HCT116 (cell line): ENCODE measurements at regions of chr17 and their contacts with region 1.

Region 1: GRCh38 chr17:36629252-36629847 is 28.0 kb downstream of the MRM1 start:
- DNase-seq: peak; percentile 54
- ATAC-seq: peak; percentile 95
- H3K4me3 ChIP-seq: no peak overlapping the region
- H3K27ac ChIP-seq: no peak overlapping the region
- H3K4me1 ChIP-seq: peaks cover 0 to 4% of the 10 kb centered on the region in 2 experiments; a peak in 2 of 4 replicates
- H3K27me3 ChIP-seq: 0 out of 2 replicates have a peak, but pooled peaks cover 4% of the 10 kb centered on the region
- CTCF ChIP-seq: peak; percentile 92 to 98 (median 98)
- POLR2A ChIP-seq: no peak
- RAD21 ChIP-seq: peak; percentile 98

Region 2: DNA sequence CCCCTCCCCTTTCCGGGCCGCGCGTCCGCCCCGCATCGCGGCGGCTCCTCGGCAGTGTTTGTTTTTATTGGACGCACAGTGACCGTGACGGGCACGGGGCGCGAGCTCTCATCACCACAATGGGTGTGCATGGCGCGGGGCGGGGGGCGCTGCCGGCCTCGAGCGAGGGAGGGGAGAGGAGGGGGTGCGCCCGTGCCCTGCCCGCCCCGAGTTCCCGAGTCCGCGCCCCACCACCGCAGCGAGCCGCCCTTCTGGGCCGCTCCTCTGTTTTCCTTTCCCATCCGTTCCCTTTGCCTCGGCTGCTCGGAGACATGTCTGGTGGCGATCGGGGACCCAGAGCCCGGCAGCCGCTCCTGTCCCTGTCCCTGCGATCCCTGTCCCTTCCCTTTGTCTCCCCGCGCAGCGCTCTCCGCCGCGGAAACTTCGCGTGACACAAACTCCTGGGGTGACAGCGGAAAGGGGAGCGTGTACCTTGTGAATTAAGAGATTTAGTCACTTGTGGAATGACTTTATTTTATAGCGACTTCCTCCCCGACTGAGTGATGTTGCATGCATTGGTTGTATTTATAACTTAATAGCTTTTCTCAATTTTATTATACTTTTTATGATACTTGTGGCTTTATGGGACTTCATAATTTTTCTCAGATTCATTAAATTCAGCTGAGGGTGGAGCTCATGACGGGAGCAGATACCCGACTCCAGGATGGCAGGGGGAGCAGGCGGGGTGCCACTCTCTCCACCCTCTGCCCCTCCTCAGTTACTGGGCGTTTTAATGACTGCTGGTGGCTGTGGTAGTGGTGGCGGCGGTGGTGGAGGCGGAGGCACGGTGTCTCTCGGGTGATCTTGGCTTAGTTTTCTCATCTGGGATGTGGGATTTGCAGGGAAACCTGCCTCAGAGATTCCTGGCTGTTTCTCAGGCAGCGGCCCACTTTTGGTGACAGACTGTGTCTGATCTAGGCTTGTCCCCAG is 12.8 kb after region 1 on chr17:
- CTCF ChIA-PET with region 1: no interaction called
- POLR2A ChIA-PET with region 1: no interaction called
- RAD21 ChIA-PET with region 1: no interaction called
- intact Hi-C with region 1: no loop called
- DNase-seq: no peak
- ATAC-seq: no peak
- H3K4me3 ChIP-seq: no peak overlapping the region
- H3K27ac ChIP-seq: no peak overlapping the region
- H3K4me1 ChIP-seq: no peaks in the 10 kb centered on the region
- H3K27me3 ChIP-seq: no peaks in the 10 kb centered on the region
- CTCF ChIP-seq: no peak
- POLR2A ChIP-seq: no peak
- RAD21 ChIP-seq: no peak

Region 3: GRCh38 chr17:36755586-36755985 is 126.2 kb after region 1 on chr17:
- CTCF ChIA-PET with region 1: interaction called, 3 read pairs
- POLR2A ChIA-PET with region 1: no interaction called
- RAD21 ChIA-PET with region 1: interaction called in 1 of 2 experiments, 3 read pairs
- intact Hi-C with region 1: loop called (anchors 1 kb)
- DNase-seq: peak; percentile 57
- ATAC-seq: peak; percentile 99
- H3K4me3 ChIP-seq: no peak overlapping the region
- H3K27ac ChIP-seq: no peak overlapping the region
- H3K4me1 ChIP-seq: peaks cover 0 to 6% of the 10 kb centered on the region in 2 experiments; a peak in 1 of 4 replicates
- H3K27me3 ChIP-seq: peaks cover 8% of the 10 kb centered on the region; the same call in 1 of the 2 replicates
- CTCF ChIP-seq: peak; percentile 42 to 87 (median 70); a peak in 5 of 6 replicates
- POLR2A ChIP-seq: no peak
- RAD21 ChIP-seq: peak; percentile 63

Region 4: GRCh38 chr17:37220607-37220953 is 591.2 kb after region 1 on chr17:
- CTCF ChIA-PET with region 1: interaction called, 3 read pairs
- POLR2A ChIA-PET with region 1: interaction called, 3 read pairs
- RAD21 ChIA-PET with region 1: no interaction called
- intact Hi-C with region 1: loop called (anchors 5 kb)
- DNase-seq: peak; percentile 2
- ATAC-seq: no peak
- H3K4me3 ChIP-seq: no peak overlapping the region
- H3K27ac ChIP-seq: no peak overlapping the region
- H3K4me1 ChIP-seq: no peaks in the 10 kb centered on the region
- H3K27me3 ChIP-seq: no peaks in the 10 kb centered on the region
- CTCF ChIP-seq: peak; percentile 24 to 45 (median 26); a peak in 4 of 6 replicates
- POLR2A ChIP-seq: no peak
- RAD21 ChIP-seq: peak; percentile 56

Region 5: DNA sequence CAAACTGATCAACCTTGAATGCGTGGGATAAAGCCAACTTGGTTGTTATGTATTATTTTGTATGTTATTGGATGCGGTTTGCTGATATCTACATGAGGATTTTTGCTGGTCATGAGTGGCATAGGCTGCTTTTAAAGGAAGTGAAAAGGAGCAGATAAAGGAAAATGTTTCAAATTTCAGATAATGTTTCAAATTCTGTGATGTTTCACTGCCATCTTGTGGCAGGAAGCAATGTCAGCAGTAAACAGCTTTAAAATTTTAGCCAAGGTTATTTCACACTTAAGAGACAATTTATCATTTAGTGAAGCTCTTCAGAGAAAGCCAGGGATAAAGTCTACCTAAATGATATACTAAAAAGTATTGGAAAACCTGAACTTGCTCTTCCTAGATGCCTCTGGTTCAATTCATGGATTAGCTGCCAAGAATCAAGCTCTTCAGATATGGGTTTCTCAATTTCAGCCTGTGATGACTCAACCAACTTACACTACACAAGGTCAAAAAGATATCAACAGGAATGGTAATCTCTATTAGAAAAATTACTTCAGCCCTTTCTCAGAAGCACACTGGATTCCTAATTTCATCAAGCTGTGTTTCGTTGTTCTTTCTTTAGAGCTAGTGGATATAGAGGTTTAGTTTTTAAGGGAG is 610.5 kb after region 1 on chr17:
- CTCF ChIA-PET with region 1: interaction called, 25 read pairs
- POLR2A ChIA-PET with region 1: no interaction called
- RAD21 ChIA-PET with region 1: no interaction called
- intact Hi-C with region 1: loop called (anchors 1 kb)
- DNase-seq: peak; percentile 3
- ATAC-seq: no peak
- H3K4me3 ChIP-seq: no peak overlapping the region
- H3K27ac ChIP-seq: no peak overlapping the region
- H3K4me1 ChIP-seq: no peaks in the 10 kb centered on the region
- H3K27me3 ChIP-seq: no peaks in the 10 kb centered on the region
- CTCF ChIP-seq: peak; percentile 56 to 71 (median 59); a peak in 5 of 6 replicates
- POLR2A ChIP-seq: no peak
- RAD21 ChIP-seq: peak; percentile 68

Region 6: GRCh38 chr17:37399404-37399803 is 770.1 kb after region 1 on chr17:
- CTCF ChIA-PET with region 1: no interaction called
- POLR2A ChIA-PET with region 1: no interaction called
- RAD21 ChIA-PET with region 1: no interaction called
- intact Hi-C with region 1: loop called (anchors 5 kb)
- DNase-seq: no peak
- ATAC-seq: 0 out of 2 replicates have a peak, but pooled peaks have one; percentile 35
- H3K4me3 ChIP-seq: no peak overlapping the region
- H3K27ac ChIP-seq: no peak overlapping the region
- H3K4me1 ChIP-seq: peaks cover 6 to 18% of the 10 kb centered on the region in 2 experiments
- H3K27me3 ChIP-seq: no peaks in the 10 kb centered on the region
- CTCF ChIP-seq: no peak
- POLR2A ChIP-seq: no peak
- RAD21 ChIP-seq: no peak